Posterior vena cava (tissue), 2 donors: ENCODE measurements at regions of chr3 and their contacts with region 1.

Region 1: GRCh38 chr3:171145798-171146197 is 119.3 kb upstream of the SLC2A2 start:
- DNase-seq: no peak

Region 2: GRCh38 chr3:169954142-169954756 is 1191.5 kb before region 1 on chr3:
- intact Hi-C with region 1: no loop called
- DNase-seq: no peak

Region 3: GRCh38 chr3:171095063-171095462 is 50.7 kb before region 1 on chr3:
- intact Hi-C with region 1: no loop called
- DNase-seq: no peak

Region 4: DNA sequence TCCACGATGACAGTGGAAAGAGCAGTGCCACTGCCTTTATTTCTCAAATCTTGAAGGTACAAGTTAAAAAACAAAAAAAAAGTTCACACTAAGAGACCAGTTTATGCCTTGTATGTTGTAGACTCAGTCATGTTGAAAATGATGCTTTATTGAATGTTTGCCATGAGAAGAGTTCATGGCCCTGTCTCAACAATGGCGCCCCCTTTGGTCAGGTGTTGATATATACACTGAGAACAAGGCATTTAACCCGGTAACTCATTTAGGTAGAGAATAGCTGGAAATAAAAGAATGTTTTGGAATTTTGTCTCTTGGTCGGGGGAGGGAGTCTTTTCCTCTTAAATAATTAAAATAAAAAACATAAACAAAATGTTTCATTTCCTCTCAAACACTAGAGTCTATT is 26.3 kb after region 1 on chr3:
- intact Hi-C with region 1: loop called in 1 of 2 experiments (anchors 2 kb)
- DNase-seq: no peak